B cell (primary cell): ENCODE measurements at regions of chr12 and their contacts with region 1.

Region 1: GRCh38 chr12:53180220-53180930 is at the starts of genes CSAD and ZNF740:
- DNase-seq: peak; percentile 98
- ATAC-seq: peak; percentile 93
- H3K4me3 ChIP-seq: peak within 1 kb of the TSS; percentile 81 to 92 (median 86)
- H3K4me3 Mint-ChIP-seq: peak within 1 kb of the TSS; percentile 95
- H3K27ac ChIP-seq: peak within 1 kb of the TSS; percentile 87 to 89
- H3K27ac Mint-ChIP-seq: peak within 1 kb of the TSS; percentile 95
- H3K4me1 ChIP-seq: peaks cover 28 to 38% of the 10 kb centered on the region in 2 donors
- H3K4me1 Mint-ChIP-seq: peaks cover 52% of the 10 kb centered on the region
- H3K27me3 ChIP-seq: no peaks in the 10 kb centered on the region
- H3K27me3 Mint-ChIP-seq: no peaks in the 10 kb centered on the region
- CTCF ChIP-seq: no peak
- total RNA-seq, gene CSAD: 56.3 and 57.0 TPM in 2 replicates
- total RNA-seq, gene ZNF740: 117 and 131 TPM in 2 replicates

Region 2: DNA sequence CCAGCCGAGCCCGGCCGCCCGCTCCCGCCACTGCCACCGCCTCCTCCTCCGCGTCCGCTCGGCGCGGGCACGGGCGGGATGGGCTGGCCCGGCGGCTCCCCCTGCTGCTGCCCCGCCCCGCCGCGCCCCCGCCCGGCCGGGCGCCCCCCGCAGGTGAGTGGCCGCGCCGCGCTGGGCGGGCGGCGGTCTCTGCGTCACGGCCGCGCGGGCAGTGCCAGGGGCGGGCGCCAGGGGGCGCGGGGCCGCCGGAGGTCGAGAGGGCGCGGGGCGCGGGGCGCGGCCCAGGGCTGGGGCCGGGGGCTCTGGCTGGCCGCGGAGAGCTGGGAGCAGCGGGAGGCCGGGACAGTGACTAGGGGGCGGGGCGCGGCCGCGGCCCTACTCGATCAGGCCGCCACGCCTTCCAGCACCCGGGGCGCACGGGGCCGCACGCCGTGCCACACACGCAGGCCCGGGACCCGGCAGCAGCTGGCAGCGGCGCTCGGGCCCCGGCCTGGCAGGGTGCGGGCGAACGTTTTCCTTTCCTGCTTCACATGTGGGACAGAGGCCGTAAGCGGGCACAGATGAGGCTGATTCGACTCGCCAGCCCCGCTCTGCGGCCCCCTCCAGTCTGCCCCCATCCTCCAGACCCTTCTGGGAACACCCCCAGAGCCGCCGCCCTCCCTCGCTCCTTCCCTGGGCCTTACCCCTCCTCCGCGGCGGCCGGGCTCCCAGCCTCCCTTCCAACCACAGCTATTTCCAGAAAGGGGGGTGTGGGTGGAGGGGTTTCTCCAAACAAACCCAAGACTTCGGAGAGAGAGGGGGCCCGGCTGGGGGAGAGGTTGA is 132.9 kb before region 1 on chr12:
- CTCF ChIA-PET with region 1: no interaction called
- POLR2A ChIA-PET with region 1: no interaction called
- intact Hi-C with region 1: loop called (anchors 2 kb)
- DNase-seq: peak; percentile 86
- ATAC-seq: peak; percentile 91
- H3K4me3 ChIP-seq: peak overlapping the region in 4 of 5 experiments; percentile 73 to 92 (median 84)
- H3K4me3 Mint-ChIP-seq: peak overlapping the region; percentile 69
- H3K27ac ChIP-seq: peak overlapping the region; percentile 38 to 65
- H3K27ac Mint-ChIP-seq: peak overlapping the region; percentile 68
- H3K4me1 ChIP-seq: peaks cover 13 to 17% of the 10 kb centered on the region in 2 donors
- H3K4me1 Mint-ChIP-seq: peaks cover 9% of the 10 kb centered on the region
- H3K27me3 ChIP-seq: peaks cover 0 to 2% (median 0%) of the 10 kb centered on the region in 4 experiments
- H3K27me3 Mint-ChIP-seq: no peaks in the 10 kb centered on the region
- CTCF ChIP-seq: peak; percentile 15

Region 3: DNA sequence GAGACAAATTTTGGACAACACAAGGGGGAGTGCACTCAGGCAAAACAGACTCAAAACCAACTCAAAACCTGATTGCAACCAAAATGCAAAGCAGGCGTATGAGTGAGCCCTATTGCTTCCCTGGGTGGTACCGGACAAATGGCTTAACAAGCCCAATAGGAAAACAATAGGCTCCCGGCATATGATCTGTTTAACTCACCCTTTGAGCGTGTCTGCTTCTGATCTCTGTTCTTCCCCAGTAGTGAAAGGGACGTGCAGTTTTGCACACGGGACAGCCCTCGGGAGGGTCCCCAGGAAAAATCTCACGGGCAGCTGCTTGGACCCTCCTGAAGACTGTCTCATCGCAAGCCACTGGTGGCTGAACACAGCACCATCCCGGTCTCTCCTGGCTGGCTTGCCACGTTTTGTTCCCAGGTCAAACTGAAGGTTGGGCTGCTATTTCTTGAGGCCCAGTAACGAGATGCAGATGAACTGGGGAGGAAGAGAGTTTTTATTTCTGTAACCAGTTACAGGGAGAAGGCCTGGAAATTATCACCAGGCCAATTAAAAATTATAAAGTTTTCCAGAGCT is 67.2 kb before region 1 on chr12:
- CTCF ChIA-PET with region 1: no interaction called
- POLR2A ChIA-PET with region 1: no interaction called
- intact Hi-C with region 1: no loop called
- DNase-seq: no peak
- ATAC-seq: no peak
- H3K4me3 ChIP-seq: no peak overlapping the region
- H3K4me3 Mint-ChIP-seq: no peak overlapping the region
- H3K27ac ChIP-seq: no peak overlapping the region
- H3K27ac Mint-ChIP-seq: no peak overlapping the region
- H3K4me1 ChIP-seq: no peaks in the 10 kb centered on the region
- H3K4me1 Mint-ChIP-seq: no peaks in the 10 kb centered on the region
- H3K27me3 ChIP-seq: no peaks in the 10 kb centered on the region
- H3K27me3 Mint-ChIP-seq: peaks cover 4% of the 10 kb centered on the region
- CTCF ChIP-seq: no peak

Region 4: GRCh38 chr12:53159195-53159839 is 21.1 kb before region 1 on chr12:
- CTCF ChIA-PET with region 1: interaction called, 47 read pairs
- POLR2A ChIA-PET with region 1: interaction called, 4 read pairs
- intact Hi-C with region 1: loop called (anchors 1 kb)
- DNase-seq: peak; percentile 88
- ATAC-seq: peak; percentile 100
- H3K4me3 ChIP-seq: no peak overlapping the region
- H3K4me3 Mint-ChIP-seq: no peak overlapping the region
- H3K27ac ChIP-seq: no peak overlapping the region
- H3K27ac Mint-ChIP-seq: no peak overlapping the region
- H3K4me1 ChIP-seq: peaks cover 4 to 8% of the 10 kb centered on the region in 2 donors
- H3K4me1 Mint-ChIP-seq: peaks cover 4% of the 10 kb centered on the region
- H3K27me3 ChIP-seq: no peaks in the 10 kb centered on the region
- H3K27me3 Mint-ChIP-seq: no peaks in the 10 kb centered on the region
- CTCF ChIP-seq: peak; percentile 97

Region 5: DNA sequence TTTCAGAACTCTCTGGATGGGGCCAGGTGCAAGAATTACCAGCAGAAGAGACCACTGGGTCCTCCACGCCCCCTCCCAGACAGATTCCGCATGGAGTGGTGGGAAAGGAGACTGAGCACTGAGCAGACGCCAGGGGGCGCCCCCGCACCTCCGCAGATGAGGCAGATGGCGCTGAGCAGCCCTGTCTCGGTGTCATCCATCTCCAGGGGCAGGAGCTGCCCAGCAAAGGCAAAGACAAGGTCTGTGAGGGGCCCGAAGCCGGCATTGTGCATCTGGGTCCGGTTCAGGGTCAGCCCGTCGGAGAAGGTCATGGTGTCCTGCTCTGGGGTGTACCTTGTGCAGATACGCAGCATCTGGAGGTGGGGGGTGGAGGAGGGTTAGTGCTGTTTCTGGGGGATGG is 33.0 kb after region 1 on chr12:
- CTCF ChIA-PET with region 1: interaction called, 56 read pairs
- POLR2A ChIA-PET with region 1: interaction called, 6 read pairs
- intact Hi-C with region 1: no loop called
- DNase-seq: peak; percentile 87
- ATAC-seq: peak; percentile 65
- H3K4me3 ChIP-seq: no peak overlapping the region
- H3K4me3 Mint-ChIP-seq: no peak overlapping the region
- H3K27ac ChIP-seq: no peak overlapping the region
- H3K27ac Mint-ChIP-seq: peak overlapping the region; percentile 46
- H3K4me1 ChIP-seq: peaks cover 57 to 65% of the 10 kb centered on the region in 2 donors
- H3K4me1 Mint-ChIP-seq: peaks cover 70% of the 10 kb centered on the region
- H3K27me3 ChIP-seq: no peaks in the 10 kb centered on the region
- H3K27me3 Mint-ChIP-seq: no peaks in the 10 kb centered on the region
- CTCF ChIP-seq: peak; percentile 97

Region 6: GRCh38 chr12:53226815-53227214 is 46.4 kb after region 1 on chr12:
- CTCF ChIA-PET with region 1: no interaction called
- POLR2A ChIA-PET with region 1: no interaction called
- intact Hi-C with region 1: no loop called
- DNase-seq: no peak
- ATAC-seq: no peak
- H3K4me3 ChIP-seq: no peak overlapping the region
- H3K4me3 Mint-ChIP-seq: no peak overlapping the region
- H3K27ac ChIP-seq: no peak overlapping the region
- H3K27ac Mint-ChIP-seq: no peak overlapping the region
- H3K4me1 ChIP-seq: peaks cover 11 to 24% of the 10 kb centered on the region in 2 donors
- H3K4me1 Mint-ChIP-seq: peaks cover 18% of the 10 kb centered on the region
- H3K27me3 ChIP-seq: no peaks in the 10 kb centered on the region
- H3K27me3 Mint-ChIP-seq: no peaks in the 10 kb centered on the region
- CTCF ChIP-seq: no peak

Region 7: DNA sequence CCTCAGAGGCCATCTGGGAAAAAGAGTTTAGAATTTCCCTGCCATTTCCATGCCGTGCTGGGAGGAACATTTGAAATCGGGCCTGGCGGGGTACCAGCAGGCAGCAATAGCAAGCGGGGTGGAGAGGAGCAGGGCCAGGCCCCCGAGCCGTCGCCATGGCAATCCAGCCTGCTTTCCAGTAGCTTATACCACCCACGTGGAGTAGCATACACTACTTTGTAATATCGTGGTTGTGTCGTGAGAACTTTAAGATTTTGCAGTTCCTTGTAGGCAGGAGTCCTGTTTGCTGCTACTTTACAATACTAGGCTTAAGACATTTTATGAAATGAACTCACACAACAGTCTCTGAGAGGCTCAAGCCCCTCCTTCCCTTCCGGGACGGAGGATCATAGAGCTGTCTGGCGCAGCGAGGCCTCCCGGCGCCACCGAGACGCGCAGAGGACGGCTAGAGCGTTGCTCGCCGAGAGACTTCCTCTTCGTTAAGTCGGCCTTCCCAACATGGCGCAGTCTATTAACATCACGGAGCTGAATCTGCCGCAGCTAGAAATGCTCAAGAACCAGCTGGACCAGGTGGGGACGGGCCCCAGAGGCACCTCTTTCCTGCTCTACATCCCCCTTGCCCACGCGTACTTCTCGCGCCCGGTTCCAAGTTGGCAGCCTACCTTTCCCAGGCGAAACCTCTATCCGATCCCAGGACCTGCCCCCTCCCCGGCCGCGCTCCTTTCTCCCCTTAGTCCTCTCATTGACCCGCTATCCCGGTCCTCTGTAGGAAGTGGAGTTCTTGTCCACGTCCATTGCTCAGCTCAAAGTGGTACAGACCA is 114.9 kb after region 1 on chr12 and contains the start of gene PFDN5:
- CTCF ChIA-PET with region 1: interaction called, 4 read pairs
- POLR2A ChIA-PET with region 1: interaction called, 6 read pairs
- intact Hi-C with region 1: loop called (anchors 1 kb)
- DNase-seq: peak; percentile 92
- ATAC-seq: peak; percentile 90
- H3K4me3 ChIP-seq: peak within 1 kb of the TSS; percentile 64 to 96 (median 82)
- H3K4me3 Mint-ChIP-seq: peak within 1 kb of the TSS; percentile 100
- H3K27ac ChIP-seq: peak within 1 kb of the TSS; percentile 69 to 86
- H3K27ac Mint-ChIP-seq: peak within 1 kb of the TSS; percentile 99
- H3K4me1 ChIP-seq: peaks cover 26 to 39% of the 10 kb centered on the region in 2 donors
- H3K4me1 Mint-ChIP-seq: peaks cover 50% of the 10 kb centered on the region
- H3K27me3 ChIP-seq: no peaks in the 10 kb centered on the region
- H3K27me3 Mint-ChIP-seq: no peaks in the 10 kb centered on the region
- CTCF ChIP-seq: no peak
- total RNA-seq, gene PFDN5: 627 and 654 TPM in 2 replicates

Region 8: DNA sequence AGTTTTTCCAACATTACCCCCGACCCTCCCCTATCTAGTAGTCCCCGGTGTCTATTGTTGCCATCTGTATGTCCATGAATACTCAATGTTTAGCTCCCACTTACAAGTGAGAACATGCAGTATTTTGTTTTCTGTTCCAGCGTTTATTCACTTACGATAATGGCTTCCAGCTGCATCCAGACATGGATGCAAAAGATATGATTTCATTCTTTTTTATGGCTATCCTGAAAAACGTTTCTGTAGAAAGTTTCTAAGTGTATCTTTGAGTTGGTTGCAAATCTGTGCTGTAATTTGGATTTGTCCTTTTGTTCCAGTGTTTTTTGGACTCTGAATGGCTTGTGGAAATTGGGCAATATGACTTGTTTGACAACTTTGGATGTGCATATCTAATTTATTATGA is 211.4 kb after region 1 on chr12:
- CTCF ChIA-PET with region 1: no interaction called
- POLR2A ChIA-PET with region 1: no interaction called
- intact Hi-C with region 1: no loop called
- DNase-seq: no peak
- ATAC-seq: no peak
- H3K4me3 ChIP-seq: no peak overlapping the region
- H3K4me3 Mint-ChIP-seq: no peak overlapping the region
- H3K27ac ChIP-seq: no peak overlapping the region
- H3K27ac Mint-ChIP-seq: no peak overlapping the region
- H3K4me1 ChIP-seq: peaks cover 14 to 25% of the 10 kb centered on the region in 2 donors
- H3K4me1 Mint-ChIP-seq: peaks cover 40% of the 10 kb centered on the region
- H3K27me3 ChIP-seq: no peaks in the 10 kb centered on the region
- H3K27me3 Mint-ChIP-seq: no peaks in the 10 kb centered on the region
- CTCF ChIP-seq: no peak